Activated T-helper 2 cell treated with anti-CD3 and anti-CD28 coated beads, Interferon-gamma antibody, Interleukin-2, Interleukin-4, amounts not matched to agents 10 μg/mL and 5 μg/mL and 100 μg/mL, durations not matched to agents 14 hours and 24 hours and 36 hours (primary cell): ENCODE measurements at regions of chr11 and their contacts with region 1.

Region 1: GRCh38 chr11:64878494-64879243 is at the start of gene EHD1:
- DNase-seq: peak; percentile 99
- H3K4me3 Mint-ChIP-seq: peak within 1 kb of the TSS; percentile 99
- H3K27ac Mint-ChIP-seq: peak within 1 kb of the TSS; percentile 95
- H3K4me1 Mint-ChIP-seq: peaks cover 55% of the 10 kb centered on the region
- H3K27me3 Mint-ChIP-seq: no peaks in the 10 kb centered on the region
- total RNA-seq, gene EHD1: 107 TPM in 2 replicates

Region 2: DNA sequence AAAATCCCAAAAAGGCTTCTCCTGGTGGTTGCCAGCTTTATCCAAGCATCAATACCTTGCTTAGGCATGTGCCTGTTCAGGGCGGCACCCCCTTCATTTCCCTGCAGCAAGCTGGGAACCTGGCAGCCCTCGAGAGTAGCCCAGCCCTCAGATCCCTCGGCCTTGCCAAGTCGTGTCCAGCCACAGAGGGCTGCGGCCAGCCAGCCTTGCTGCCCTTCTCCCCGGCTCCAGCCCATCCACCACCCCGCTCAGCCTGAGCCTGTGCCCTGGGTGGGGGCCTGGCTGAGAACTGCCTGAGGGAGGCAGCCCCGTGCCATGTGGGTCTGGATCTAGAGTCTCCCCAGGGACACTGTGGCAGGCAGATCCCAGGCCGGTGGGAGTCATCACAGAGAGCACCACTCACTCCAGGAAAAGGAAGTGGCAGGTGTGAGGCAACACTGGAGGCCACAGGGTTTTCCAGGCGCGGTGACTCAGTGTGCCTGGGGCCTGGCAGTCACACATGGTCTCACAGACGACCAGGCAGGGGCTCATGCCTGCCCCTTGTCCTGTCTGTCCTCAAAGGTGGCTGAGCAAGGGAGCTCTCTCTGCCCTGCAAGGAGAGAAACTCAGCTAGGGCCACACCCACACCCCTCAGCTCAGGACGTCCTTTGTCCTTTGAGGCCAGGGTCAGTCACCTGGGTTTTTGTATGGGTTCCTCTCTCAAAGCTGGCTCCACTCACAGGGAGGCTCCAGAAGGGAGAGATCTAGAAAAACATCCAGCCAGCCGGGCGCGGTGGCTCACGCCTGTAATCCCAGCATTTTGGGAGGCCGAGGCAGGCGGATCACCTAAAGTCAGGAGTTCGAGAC is 22.1 kb before region 1 on chr11:
- intact Hi-C with region 1: loop called (anchors 1 kb)
- DNase-seq: no peak
- H3K4me3 Mint-ChIP-seq: peak overlapping the region; percentile 18
- H3K27ac Mint-ChIP-seq: peak overlapping the region; percentile 77
- H3K4me1 Mint-ChIP-seq: peaks cover 73% of the 10 kb centered on the region
- H3K27me3 Mint-ChIP-seq: no peaks in the 10 kb centered on the region

Region 3: DNA sequence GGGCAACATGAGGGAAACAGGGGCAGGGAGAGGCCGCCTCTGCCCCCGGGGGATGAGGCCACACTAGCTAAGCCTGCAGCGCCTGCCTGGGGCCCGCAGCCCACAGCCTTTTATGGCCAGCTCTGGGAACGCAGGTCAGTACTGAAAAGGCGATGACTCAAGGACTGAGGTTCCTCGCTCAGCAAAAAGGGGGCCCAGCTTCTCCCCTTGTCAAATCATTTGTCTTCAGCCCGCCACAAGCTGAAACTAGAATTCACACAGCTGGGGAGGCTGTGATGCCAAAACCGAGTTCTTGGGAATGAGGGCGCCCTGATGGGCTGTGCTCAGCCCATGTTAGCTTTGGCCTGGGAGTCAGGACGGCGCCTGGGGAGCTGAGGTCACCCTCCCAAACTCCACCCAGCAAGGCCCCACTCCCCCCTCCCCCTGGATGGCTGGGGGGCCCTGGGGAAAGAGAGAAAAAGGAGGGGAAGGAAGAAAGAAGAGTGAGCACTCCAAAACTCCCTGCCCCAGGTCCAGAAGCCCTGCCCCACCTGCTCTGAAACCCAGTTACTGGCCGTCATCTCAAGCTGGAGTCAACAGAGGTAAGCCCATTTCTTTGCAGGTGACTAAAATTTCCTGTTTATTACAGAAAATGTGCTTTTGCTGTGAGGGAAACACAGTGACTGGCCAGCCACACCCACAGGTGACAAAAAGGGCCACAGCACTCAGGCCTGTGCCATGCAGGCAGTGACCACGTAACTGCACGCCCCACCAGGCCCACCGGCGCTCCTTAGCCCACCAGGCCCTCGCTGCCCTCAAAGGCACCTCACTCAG is 14.0 kb before region 1 on chr11:
- intact Hi-C with region 1: loop called (anchors 1 kb)
- DNase-seq: no peak
- H3K4me3 Mint-ChIP-seq: peak overlapping the region; percentile 70
- H3K27ac Mint-ChIP-seq: peak overlapping the region; percentile 98
- H3K4me1 Mint-ChIP-seq: peaks cover 78% of the 10 kb centered on the region
- H3K27me3 Mint-ChIP-seq: no peaks in the 10 kb centered on the region

Region 4: DNA sequence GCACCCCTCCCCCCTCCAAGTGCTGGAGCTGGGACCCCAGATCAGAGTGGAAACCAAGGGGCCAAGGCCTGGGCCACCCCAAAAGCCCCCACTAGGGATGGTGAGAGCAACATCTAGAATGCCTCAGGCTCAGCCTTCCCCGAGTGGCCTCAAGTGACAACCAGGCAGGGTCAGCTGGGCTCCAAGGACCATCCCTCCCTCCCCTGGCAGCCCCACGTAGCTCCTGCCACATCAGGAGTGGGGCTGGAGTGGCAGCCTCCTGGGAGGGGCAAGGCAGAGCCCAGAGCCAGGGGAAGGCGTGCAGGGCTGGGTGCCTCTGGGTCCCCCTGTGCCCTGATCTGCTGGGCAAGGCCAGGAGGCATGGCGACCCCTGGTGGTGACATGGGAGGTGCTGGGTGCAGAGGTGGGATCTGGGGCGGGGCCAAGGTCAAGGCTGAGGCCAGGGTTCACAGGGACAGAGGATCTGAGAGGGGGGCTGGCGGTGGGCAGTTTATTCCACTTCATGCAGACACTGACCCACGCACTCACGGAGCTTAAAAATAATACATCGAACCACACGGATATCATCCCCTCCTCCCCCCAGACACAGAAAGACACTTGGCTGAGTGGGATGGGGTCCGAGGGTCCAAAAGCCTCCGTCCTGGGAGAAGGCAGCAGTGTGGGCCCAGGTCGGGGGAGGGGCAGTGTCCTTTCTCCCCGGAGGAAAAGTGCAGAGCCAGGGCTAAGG is 15.6 kb after region 1 on chr11:
- intact Hi-C with region 1: loop called (anchors 2 kb)
- DNase-seq: peak; percentile 83
- H3K4me3 Mint-ChIP-seq: no peak overlapping the region
- H3K27ac Mint-ChIP-seq: no peak overlapping the region
- H3K4me1 Mint-ChIP-seq: peaks cover 1% of the 10 kb centered on the region
- H3K27me3 Mint-ChIP-seq: no peaks in the 10 kb centered on the region

Region 5: GRCh38 chr11:65497141-65498041 is 618.7 kb after region 1 on chr11:
- intact Hi-C with region 1: loop called (anchors 10 kb)
- DNase-seq: peak; percentile 97
- H3K4me3 Mint-ChIP-seq: no peak overlapping the region
- H3K27ac Mint-ChIP-seq: peak overlapping the region; percentile 88
- H3K4me1 Mint-ChIP-seq: peaks cover 30% of the 10 kb centered on the region
- H3K27me3 Mint-ChIP-seq: no peaks in the 10 kb centered on the region